HEK293 (cell line): ENCODE measurements at regions of chr22 and their contacts with region 1.

Region 1: GRCh38 chr22:46762238-46763050 is at the start of gene TBC1D22A:
- H3K4me3 ChIP-seq: peak within 1 kb of the TSS; percentile 77
- H3K27ac ChIP-seq: peak within 1 kb of the TSS; percentile 91
- H3K4me1 ChIP-seq: peaks cover 3% of the 10 kb centered on the region; the same call in 1 of the 2 replicates
- CTCF ChIP-seq: peak; percentile 69; the same call in 1 of the 2 replicates

Region 2: GRCh38 chr22:46737976-46738646 is 24.3 kb before region 1 on chr22 and contains the start of gene CERK:
- CTCF ChIA-PET with region 1: interaction called, 32 read pairs
- POLR2A ChIA-PET with region 1: interaction called, 15 read pairs
- H3K4me3 ChIP-seq: peak within 1 kb of the TSS; percentile 73
- H3K27ac ChIP-seq: peak within 1 kb of the TSS; percentile 86
- H3K4me1 ChIP-seq: peaks cover 38% of the 10 kb centered on the region
- CTCF ChIP-seq: no peak

Region 3: GRCh38 chr22:46748908-46749675 is 13.4 kb before region 1 on chr22:
- CTCF ChIA-PET with region 1: interaction called, 33 read pairs
- POLR2A ChIA-PET with region 1: interaction called, 9 read pairs
- H3K4me3 ChIP-seq: no peak overlapping the region
- H3K27ac ChIP-seq: no peak overlapping the region
- H3K4me1 ChIP-seq: no peaks in the 10 kb centered on the region
- CTCF ChIP-seq: no peak

Region 4: DNA sequence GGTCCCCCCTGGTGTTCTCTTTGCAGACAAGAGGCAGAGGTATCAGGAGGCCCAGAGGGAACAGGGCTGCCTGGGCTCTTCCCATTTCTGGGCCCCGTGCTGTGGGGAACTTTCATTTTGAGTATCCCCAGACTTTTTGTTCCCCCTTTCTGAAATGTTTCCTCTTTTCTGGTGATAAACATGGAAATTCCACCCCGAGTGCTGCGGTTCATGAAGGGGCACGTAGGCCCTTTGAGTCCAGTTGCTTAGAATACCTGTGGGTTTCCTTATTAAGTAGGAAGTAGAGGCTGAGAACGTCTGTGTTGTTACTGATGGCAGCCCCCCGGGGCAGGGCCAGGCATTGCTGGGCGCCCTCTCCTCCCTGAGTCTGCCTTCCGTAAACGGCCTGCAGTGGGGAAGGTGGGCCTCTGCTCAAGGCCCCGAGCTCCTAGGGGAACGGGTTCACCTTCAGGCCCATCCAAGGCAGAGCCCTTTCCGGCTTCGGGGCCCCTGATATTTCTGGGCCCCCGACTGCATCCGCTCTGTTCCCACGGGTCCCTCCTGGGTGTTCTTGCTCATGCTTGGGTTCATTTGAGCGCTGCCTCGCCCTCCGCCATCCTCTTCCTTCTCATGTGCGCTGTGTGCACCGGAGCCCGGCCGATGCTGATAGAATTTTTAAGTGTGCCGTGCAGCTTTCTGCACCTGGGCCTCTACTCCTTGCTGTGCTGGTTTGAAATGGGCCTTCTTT is 12.0 kb after region 1 on chr22:
- CTCF ChIA-PET with region 1: interaction called, 33 read pairs
- POLR2A ChIA-PET with region 1: interaction called, 86 read pairs
- H3K4me3 ChIP-seq: no peak overlapping the region
- H3K27ac ChIP-seq: peak overlapping the region; percentile 68
- H3K4me1 ChIP-seq: peaks cover 33% of the 10 kb centered on the region
- CTCF ChIP-seq: no peak

Region 5: GRCh38 chr22:46780453-46780852 is 18.0 kb after region 1 on chr22:
- CTCF ChIA-PET with region 1: interaction called, 33 read pairs
- POLR2A ChIA-PET with region 1: interaction called, 86 read pairs
- H3K4me3 ChIP-seq: no peak overlapping the region
- H3K27ac ChIP-seq: no peak overlapping the region
- H3K4me1 ChIP-seq: peaks cover 15% of the 10 kb centered on the region
- CTCF ChIP-seq: no peak

Region 6: GRCh38 chr22:46806794-46807193 is 44.4 kb after region 1 on chr22:
- CTCF ChIA-PET with region 1: interaction called, 223 read pairs
- POLR2A ChIA-PET with region 1: interaction called, 24 read pairs
- H3K4me3 ChIP-seq: no peak overlapping the region
- H3K27ac ChIP-seq: no peak overlapping the region
- H3K4me1 ChIP-seq: no peaks in the 10 kb centered on the region
- CTCF ChIP-seq: no peak

Region 7: DNA sequence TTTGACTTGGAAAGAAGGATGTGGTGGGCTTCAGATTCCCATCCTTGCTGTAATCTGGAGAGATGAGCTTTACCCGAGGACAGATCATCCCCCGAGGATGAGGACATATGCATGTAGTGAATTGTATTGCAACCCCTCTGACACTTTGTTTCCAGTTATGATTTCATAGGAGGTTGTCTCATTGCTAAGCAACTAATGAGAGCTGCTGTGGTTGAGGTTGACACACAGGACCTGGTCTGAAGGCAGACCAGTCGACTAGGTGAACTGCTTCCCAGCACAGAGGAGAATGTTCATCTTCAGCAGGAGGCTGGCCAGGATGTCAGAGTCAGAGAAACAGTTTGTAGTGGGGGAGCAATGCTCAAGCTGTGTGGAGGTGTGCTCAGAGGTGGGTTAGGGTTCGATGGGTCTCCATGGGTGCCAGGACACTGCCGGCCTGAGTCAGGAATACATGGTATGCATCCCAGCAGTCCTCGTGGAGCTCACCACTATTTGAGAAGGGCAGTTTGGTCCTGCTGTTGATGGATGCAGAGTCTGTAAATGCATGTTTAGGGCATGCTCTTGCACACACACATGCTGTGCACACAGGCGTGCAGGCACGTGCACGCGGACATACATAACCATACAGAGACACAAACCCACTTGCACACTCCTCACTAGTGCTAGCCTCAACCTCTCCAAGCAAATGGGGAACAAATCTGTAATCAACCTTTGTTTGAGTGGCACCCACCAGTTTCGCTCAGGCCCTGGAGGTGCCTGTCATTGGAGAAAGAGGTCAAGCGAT is 153.7 kb after region 1 on chr22:
- CTCF ChIA-PET with region 1: no interaction called
- POLR2A ChIA-PET with region 1: no interaction called
- H3K4me3 ChIP-seq: no peak overlapping the region
- H3K27ac ChIP-seq: no peak overlapping the region
- H3K4me1 ChIP-seq: no peaks in the 10 kb centered on the region
- CTCF ChIP-seq: no peak